ENCODE measurements at regions of chr1 and their contacts with region 1.

Region 1: GRCh38 chr1:242017584-242018233 is 18.8 kb upstream of the MAP1LC3C start:
- DNase-seq: no peak
- ATAC-seq: peak; percentile 93
- H3K4me3 ChIP-seq: no peak overlapping the region
- H3K27ac ChIP-seq: no peak overlapping the region
- H3K4me1 ChIP-seq: no peaks in the 10 kb centered on the region
- H3K27me3 ChIP-seq: no peaks in the 10 kb centered on the region
- CTCF ChIP-seq: peak; percentile 54 to 70 (median 61)
- EP300 ChIP-seq: no peak
- POLR2A ChIP-seq: no peak
- RAD21 ChIP-seq: peak; percentile 55

Region 2: DNA sequence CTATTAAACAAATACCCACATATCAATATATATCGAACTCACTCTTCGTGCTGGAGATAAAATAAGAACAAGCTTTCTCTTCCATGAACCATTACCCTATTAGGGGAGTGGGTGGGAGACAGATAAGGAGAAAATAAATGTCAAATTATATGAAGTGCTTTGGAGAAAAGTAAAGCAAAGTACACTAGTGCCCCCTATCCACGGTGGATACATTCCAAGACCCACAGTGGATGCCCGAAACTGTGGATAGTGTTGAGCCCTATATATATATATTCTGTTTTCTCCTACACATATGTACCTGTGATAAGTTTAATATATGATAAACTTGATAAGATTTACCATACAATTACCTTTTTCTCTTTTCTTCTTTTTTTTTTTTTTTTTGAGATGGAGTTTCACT is 552.7 kb before region 1 on chr1:
- CTCF ChIA-PET with region 1: no interaction called
- POLR2A ChIA-PET with region 1: no interaction called
- RAD21 ChIA-PET with region 1: no interaction called
- SMC1A ChIA-PET with region 1: no interaction called
- in situ Hi-C with region 1: no loop called
- intact Hi-C with region 1: no loop called
- DNase-seq: no peak
- ATAC-seq: no peak
- H3K4me3 ChIP-seq: no peak overlapping the region
- H3K27ac ChIP-seq: no peak overlapping the region
- H3K4me1 ChIP-seq: no peaks in the 10 kb centered on the region
- H3K27me3 ChIP-seq: no peaks in the 10 kb centered on the region
- CTCF ChIP-seq: no peak
- EP300 ChIP-seq: no peak
- POLR2A ChIP-seq: no peak
- RAD21 ChIP-seq: 0 out of 2 replicates have a peak, but pooled peaks have one; percentile 2

Region 3: DNA sequence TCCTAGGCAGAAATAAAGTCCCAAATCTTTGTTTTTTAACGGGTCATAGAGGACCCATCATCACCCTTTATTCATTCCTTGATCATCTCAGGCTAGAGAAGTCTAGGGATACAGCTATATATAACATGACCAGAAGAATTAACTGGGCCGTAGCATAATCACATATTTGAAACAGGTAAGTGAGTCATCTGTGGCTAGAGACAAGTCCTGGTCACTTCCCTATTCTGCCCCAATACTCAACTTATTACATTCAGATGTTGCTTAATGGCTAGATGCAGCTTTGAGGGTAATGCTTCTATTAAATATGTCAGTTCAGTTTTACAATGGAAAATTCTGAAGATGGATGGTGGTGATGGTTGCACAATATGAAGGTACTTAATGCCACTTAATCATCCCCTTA is 122.7 kb before region 1 on chr1:
- CTCF ChIA-PET with region 1: interaction called, 11 read pairs
- POLR2A ChIA-PET with region 1: no interaction called
- RAD21 ChIA-PET with region 1: no interaction called
- SMC1A ChIA-PET with region 1: no interaction called
- in situ Hi-C with region 1: no loop called
- intact Hi-C with region 1: loop called (anchors 1 kb)
- DNase-seq: no peak
- ATAC-seq: peak; percentile 84
- H3K4me3 ChIP-seq: no peak overlapping the region
- H3K27ac ChIP-seq: no peak overlapping the region
- H3K4me1 ChIP-seq: peaks cover 3% of the 10 kb centered on the region; the same call in 1 of the 2 replicates
- H3K27me3 ChIP-seq: no peaks in the 10 kb centered on the region
- CTCF ChIP-seq: no peak
- EP300 ChIP-seq: no peak
- POLR2A ChIP-seq: no peak
- RAD21 ChIP-seq: no peak

Region 4: DNA sequence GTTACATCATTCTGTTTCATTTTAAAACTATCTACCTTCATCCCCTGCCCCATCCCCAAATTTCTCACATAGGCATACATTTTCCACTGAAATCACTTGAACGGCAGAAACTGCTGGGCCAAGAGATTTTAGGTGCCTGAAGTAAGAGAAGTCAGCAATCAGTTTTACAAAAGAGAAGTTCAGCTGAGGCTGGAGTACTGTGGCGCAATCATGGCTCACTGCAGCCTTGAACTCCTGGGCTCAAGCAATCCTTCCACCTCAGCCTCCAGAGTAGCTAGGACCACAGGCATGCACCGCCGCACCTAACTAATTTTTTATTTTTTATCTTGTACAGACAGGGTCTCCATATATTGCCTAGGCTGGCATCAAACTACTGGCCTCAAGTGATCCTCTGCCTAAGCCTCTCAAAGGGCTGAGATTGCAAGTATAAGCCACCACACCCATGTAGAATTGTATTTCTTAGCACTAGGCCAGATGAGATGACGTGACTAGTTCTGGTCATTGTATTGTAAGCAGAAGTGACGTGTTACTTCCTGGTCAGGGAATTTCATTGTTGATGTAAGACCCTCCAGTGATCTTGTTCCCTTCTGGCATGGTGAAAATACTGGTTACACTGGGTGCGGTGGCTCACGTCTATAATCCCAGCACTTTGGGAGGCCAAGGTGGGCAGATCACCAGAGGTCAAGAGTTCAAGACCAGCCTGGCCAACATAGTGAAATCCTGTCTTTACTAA is 53.0 kb before region 1 on chr1:
- CTCF ChIA-PET with region 1: no interaction called
- POLR2A ChIA-PET with region 1: no interaction called
- RAD21 ChIA-PET with region 1: no interaction called
- SMC1A ChIA-PET with region 1: no interaction called
- in situ Hi-C with region 1: no loop called
- intact Hi-C with region 1: no loop called
- DNase-seq: no peak
- ATAC-seq: no peak
- H3K4me3 ChIP-seq: no peak overlapping the region
- H3K27ac ChIP-seq: no peak overlapping the region
- H3K4me1 ChIP-seq: no peaks in the 10 kb centered on the region
- H3K27me3 ChIP-seq: no peaks in the 10 kb centered on the region
- CTCF ChIP-seq: no peak
- EP300 ChIP-seq: no peak
- POLR2A ChIP-seq: no peak
- RAD21 ChIP-seq: no peak

Region 5: GRCh38 chr1:242034393-242034792 is 16.7 kb after region 1 on chr1:
- CTCF ChIA-PET with region 1: no interaction called
- POLR2A ChIA-PET with region 1: no interaction called
- RAD21 ChIA-PET with region 1: no interaction called
- SMC1A ChIA-PET with region 1: no interaction called
- in situ Hi-C with region 1: no loop called
- intact Hi-C with region 1: no loop called
- DNase-seq: no peak
- ATAC-seq: no peak
- H3K4me3 ChIP-seq: no peak overlapping the region
- H3K27ac ChIP-seq: no peak overlapping the region
- H3K4me1 ChIP-seq: no peaks in the 10 kb centered on the region
- H3K27me3 ChIP-seq: no peaks in the 10 kb centered on the region
- CTCF ChIP-seq: no peak
- EP300 ChIP-seq: no peak
- POLR2A ChIP-seq: no peak
- RAD21 ChIP-seq: no peak

Region 6: GRCh38 chr1:242454262-242455045 is 436.7 kb after region 1 on chr1:
- CTCF ChIA-PET with region 1: no interaction called
- POLR2A ChIA-PET with region 1: no interaction called
- RAD21 ChIA-PET with region 1: no interaction called
- SMC1A ChIA-PET with region 1: no interaction called
- in situ Hi-C with region 1: no loop called
- intact Hi-C with region 1: loop called (anchors 10 kb)
- DNase-seq: no peak
- ATAC-seq: peak; percentile 74
- H3K4me3 ChIP-seq: no peak overlapping the region
- H3K27ac ChIP-seq: no peak overlapping the region
- H3K4me1 ChIP-seq: no peaks in the 10 kb centered on the region
- H3K27me3 ChIP-seq: 0 out of 4 replicates have a peak, but pooled peaks cover 0 to 3% of the 10 kb centered on the region in 2 experiments
- CTCF ChIP-seq: peak; percentile 55 to 57 (median 55)
- EP300 ChIP-seq: no peak
- POLR2A ChIP-seq: no peak
- RAD21 ChIP-seq: peak; percentile 61